ENCODE measurements at regions of chr13 and their contacts with region 1.

Region 1: DNA sequence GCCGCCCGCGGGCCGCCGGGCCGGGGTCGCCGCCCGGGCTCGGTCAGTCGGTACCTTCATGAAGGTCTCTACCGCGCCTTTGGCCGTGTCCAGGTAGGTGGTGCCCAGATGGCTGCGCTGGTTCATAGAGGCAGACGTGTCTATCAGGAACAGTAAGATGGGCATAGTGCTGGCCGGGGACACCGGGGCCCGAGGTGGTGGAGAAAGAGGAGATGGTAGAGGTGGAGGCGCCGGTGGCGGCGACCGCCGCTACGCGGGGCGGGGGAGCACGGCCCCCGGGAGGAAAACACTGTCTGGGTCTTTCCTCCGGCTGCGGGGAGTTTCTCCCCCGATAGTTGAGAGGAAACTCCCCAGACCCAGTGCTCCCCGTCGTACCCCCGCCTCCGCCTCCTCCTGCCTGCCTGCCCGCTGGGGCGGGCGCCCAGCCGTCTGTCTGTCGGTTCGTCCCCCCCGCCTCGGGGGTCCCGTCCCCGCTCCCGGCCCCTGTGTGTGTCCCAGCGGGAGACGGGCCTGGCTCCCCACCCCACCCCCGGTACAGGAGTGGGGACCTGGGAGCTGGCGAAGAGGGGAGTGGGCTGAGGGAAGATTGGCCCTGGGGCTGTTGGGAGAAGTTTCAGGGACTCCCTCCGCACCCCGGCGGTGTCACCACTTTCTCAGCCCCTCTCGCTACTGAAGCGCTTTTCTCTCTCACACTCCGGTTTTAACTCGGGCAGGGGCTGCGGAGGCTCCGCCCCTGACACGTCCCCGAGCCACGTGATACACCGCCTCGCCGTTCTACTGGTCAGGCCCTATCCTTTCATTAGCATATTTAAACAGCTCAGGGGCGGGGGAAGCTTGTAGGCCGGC is at the start of gene INTS6:
- DNase-seq: peak; percentile 99
- ATAC-seq: peak; percentile 97
- H3K4me3 ChIP-seq: peak within 1 kb of the TSS; percentile 79 to 100
- H3K27ac ChIP-seq: peak within 1 kb of the TSS; percentile 88 to 100
- H3K4me1 ChIP-seq: peaks cover 0 to 3% of the 10 kb centered on the region in 2 donors
- H3K27me3 ChIP-seq: peaks cover 0 to 2% of the 10 kb centered on the region in 2 donors
- total RNA-seq, gene INTS6: 38.1 to 51.6 TPM

Region 2: GRCh38 chr13:51324714-51325420 is 127.7 kb before region 1 on chr13:
- intact Hi-C with region 1: no loop called
- DNase-seq: no peak
- ATAC-seq: no peak
- H3K4me3 ChIP-seq: no peak overlapping the region
- H3K27ac ChIP-seq: no peak overlapping the region
- H3K4me1 ChIP-seq: peaks cover 0 to 2% of the 10 kb centered on the region in 2 donors
- H3K27me3 ChIP-seq: no peaks in the 10 kb centered on the region

Region 3: GRCh38 chr13:52001120-52001731 is 548.6 kb after region 1 on chr13:
- intact Hi-C with region 1: loop called in 1 of 2 experiments (anchors 5 kb)
- DNase-seq: no peak
- ATAC-seq: peak; percentile 54
- H3K4me3 ChIP-seq: no peak overlapping the region
- H3K27ac ChIP-seq: no peak overlapping the region
- H3K4me1 ChIP-seq: no peaks in the 10 kb centered on the region
- H3K27me3 ChIP-seq: no peaks in the 10 kb centered on the region

Measured in aorta (tissue), 5 donors.